GM13977 (cell line): ENCODE measurements at regions of chr5 and their contacts with region 1.

Region 1: DNA sequence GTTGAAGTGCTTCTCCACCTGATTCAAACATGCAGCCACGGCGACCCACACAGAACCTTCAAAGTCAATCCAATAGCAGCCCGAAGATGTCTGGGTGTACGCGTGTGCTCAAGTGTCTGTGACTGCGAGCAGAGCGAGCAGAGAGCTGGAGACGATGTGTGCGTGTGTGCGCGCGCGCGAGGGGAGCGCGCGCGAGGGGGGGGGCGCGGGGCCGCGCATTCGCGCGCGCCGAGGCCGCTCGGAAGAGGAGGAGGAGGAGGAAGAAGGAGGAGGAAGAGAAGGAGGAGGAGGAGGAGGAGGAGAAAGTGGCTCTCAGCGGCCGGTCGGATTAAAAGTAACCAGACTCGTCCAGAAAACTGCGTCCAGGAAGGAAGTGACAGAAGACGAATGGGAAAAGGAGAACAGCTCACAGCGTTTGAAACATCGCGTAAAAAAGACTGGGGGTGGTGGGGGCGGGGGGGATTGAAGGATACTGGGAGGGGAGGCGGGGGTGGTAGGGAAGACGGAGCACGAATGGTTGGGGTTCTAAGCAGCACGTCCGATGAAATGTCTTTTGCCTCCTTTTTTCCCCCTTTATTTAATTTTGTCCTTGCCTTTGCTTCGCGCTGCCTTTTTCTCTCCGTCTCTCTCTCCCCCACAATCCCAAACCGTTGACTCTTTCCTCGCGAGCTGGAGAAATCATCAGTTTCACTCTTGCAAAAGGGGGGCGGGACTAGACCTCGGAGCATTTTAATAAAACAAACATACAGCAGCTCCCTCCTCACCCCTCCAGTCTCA is at the start of gene MEF2C:
- DNase-seq: peak; percentile 59
- CTCF ChIP-seq: no peak

Region 2: GRCh38 chr5:88602584-88602983 is 280.7 kb before region 1 on chr5:
- in situ Hi-C with region 1: no loop called
- DNase-seq: no peak
- CTCF ChIP-seq: peak; percentile 58

Region 3: DNA sequence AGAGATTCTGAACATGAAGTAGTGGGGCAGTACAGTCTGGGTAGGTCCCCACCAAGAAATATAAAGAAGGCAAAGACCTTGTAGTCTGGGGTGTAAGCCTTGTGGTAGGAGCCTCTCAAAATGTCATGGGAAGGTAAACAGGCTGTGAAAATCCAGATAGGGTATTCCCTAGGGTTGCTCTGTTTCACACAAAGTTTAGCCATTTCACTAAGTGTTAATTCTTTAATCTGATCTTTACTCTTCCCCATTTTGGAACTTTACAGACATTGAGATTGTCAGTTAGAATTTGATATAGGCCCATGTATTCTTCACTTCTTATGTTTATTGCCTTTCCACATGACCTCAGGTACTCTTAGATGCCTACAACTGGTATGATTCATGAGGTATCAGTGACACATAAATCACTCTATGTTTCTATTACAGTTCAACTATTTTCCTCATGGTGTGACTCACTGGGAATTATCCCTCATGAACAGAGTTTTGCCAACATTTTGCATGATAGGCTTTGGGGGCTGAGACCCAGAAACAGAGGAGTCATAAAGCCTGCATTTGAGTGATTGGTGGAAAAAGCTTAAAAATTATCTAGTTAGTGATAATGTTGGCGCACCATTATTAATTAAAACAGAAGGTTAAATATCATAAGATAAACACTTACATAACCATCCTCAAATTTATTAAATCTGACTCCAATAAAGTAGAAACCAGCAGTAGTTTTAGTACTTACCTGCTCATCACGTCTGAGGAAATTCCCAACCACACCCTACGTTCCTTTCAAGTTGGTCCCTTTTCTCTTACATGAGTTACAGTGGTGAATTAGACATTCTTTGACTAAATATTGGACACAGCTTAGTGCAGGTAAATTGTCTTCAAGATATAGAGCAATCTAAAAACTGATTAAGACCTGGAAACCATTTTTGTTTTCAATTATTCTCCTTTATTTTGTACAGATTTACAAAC is 399.6 kb after region 1 on chr5:
- in situ Hi-C with region 1: loop called (anchors 25 kb)
- DNase-seq: no peak
- CTCF ChIP-seq: no peak

Region 4: DNA sequence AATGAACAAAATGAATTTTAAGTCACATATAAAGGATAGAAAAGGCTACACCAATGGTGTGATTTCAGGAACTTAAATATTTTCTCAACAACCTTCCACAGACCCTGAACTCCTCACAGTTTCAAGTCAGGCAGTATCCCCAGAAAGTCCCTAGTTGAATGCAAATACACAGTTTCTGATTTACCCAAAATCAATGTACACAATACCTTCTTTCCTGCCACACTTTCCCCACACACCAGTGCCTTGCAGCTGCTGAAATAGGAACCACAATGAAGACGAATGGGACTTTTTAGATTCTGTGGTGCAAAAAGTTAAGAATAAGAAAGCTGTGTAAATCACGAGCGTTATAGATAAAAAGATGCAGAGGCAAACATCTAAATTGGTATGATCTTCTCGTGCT is 552.1 kb after region 1 on chr5:
- in situ Hi-C with region 1: loop called (anchors 10 kb)
- DNase-seq: peak; percentile 5
- CTCF ChIP-seq: no peak